ENCODE measurements at regions of chr1 and their contacts with region 1.

Region 1: GRCh38 chr1:151839457-151840405 is at the start of gene C2CD4D:
- DNase-seq: peak; percentile 50 to 91 (median 59)
- ATAC-seq: peak; percentile 78
- H3K4me3 ChIP-seq: peak within 1 kb of the TSS; percentile 70
- H3K4me3 Mint-ChIP-seq: peak within 1 kb of the TSS; percentile 85
- H3K27ac ChIP-seq: peak within 1 kb of the TSS; percentile 54 to 90
- H3K27ac Mint-ChIP-seq: peak within 1 kb of the TSS; percentile 86
- H3K4me1 ChIP-seq: peaks cover 55% of the 10 kb centered on the region
- H3K4me1 Mint-ChIP-seq: peaks cover 62% of the 10 kb centered on the region
- H3K27me3 ChIP-seq: no peaks in the 10 kb centered on the region
- H3K27me3 Mint-ChIP-seq: no peaks in the 10 kb centered on the region
- CTCF ChIP-seq: no peak
- total RNA-seq, gene C2CD4D: 0.75 to 0.88 TPM

Region 2: DNA sequence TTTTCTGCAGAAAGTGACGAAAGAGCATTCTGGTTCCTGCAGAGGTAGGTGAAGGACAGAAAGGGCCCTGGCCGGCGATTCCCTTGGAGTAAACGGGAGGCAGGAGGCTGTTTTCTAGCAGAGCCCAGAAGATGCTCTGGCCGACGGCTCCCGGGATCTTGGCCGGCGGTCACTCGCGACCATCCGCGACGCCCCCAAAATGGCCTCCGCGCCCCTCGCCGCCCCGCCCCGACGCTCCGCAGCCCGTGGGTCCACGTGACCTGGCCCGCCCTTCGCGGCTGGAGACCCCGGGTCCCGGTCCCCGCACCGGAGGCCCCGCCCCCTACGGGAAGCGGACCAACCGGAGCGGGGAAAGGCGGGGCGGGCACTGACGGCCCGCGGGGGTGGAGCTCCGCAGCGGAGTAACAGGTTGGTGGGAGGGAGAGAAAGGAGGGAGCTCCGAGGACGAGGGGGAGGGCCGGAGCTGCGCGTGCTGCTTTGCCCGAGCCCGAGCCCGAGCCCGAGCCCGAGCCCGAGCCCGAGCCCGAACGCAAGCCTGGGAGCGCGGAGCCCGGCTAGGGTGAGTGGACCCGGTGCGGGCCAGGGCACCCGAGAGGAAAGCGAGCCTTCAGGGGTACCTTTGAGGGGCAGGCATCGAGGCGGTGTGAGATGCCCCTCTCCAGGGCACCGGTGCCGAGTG is 328.6 kb before region 1 on chr1 and contains the start of gene CGN:
- CTCF ChIA-PET with region 1: no interaction called
- POLR2A ChIA-PET with region 1: no interaction called
- intact Hi-C with region 1: no loop called
- DNase-seq: peak; percentile 70 to 95 (median 84)
- ATAC-seq: peak; percentile 97
- H3K4me3 ChIP-seq: peak within 1 kb of the TSS; percentile 76
- H3K4me3 Mint-ChIP-seq: peak within 1 kb of the TSS; percentile 97
- H3K27ac ChIP-seq: peak within 1 kb of the TSS in 1 of 2 donors; percentile 6
- H3K27ac Mint-ChIP-seq: peak within 1 kb of the TSS; percentile 75
- H3K4me1 ChIP-seq: peaks cover 30% of the 10 kb centered on the region
- H3K4me1 Mint-ChIP-seq: peaks cover 32% of the 10 kb centered on the region
- H3K27me3 ChIP-seq: no peaks in the 10 kb centered on the region
- H3K27me3 Mint-ChIP-seq: no peaks in the 10 kb centered on the region
- CTCF ChIP-seq: no peak
- total RNA-seq, gene CGN: 0.08 to 0.28 TPM

Region 3: DNA sequence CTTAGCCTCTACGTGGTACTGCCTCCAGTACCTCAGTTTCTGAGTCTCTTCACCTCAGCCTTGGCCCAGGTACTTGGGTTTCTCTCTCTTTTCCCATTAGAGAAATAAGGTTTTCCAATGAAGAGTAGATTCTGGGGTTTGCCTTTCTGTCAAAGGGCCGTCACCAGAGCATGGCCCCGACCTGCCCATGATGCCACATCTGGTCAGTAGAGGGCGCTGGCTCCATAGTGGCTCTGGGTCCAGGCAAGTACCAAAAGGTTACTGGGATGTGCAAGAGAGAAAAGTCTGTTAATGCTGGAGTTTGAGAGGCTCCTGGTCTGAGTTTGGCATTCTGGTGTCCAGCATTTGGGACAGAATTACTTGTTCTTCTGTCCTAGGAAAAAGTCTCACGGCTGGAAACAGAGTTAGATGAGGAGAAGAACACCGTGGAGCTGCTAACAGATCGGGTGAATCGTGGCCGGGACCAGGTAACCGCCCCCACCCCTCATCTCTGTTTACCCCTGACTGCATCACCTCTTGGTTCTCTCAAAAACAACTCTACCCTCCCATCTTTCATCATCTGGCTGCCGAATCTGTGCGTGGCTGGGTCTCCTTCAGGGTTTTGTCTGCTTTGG is 305.0 kb before region 1 on chr1:
- CTCF ChIA-PET with region 1: interaction called, 3 read pairs
- POLR2A ChIA-PET with region 1: no interaction called
- intact Hi-C with region 1: loop called in 1 of 2 experiments (anchors 2 kb)
- DNase-seq: peak; percentile 60 to 84 (median 72)
- ATAC-seq: peak; percentile 84
- H3K4me3 ChIP-seq: no peak overlapping the region
- H3K4me3 Mint-ChIP-seq: no peak overlapping the region
- H3K27ac ChIP-seq: no peak overlapping the region
- H3K27ac Mint-ChIP-seq: no peak overlapping the region
- H3K4me1 ChIP-seq: peaks cover 10% of the 10 kb centered on the region
- H3K4me1 Mint-ChIP-seq: peaks cover 5% of the 10 kb centered on the region
- H3K27me3 ChIP-seq: no peaks in the 10 kb centered on the region
- H3K27me3 Mint-ChIP-seq: no peaks in the 10 kb centered on the region
- CTCF ChIP-seq: peak; percentile 82

Region 4: DNA sequence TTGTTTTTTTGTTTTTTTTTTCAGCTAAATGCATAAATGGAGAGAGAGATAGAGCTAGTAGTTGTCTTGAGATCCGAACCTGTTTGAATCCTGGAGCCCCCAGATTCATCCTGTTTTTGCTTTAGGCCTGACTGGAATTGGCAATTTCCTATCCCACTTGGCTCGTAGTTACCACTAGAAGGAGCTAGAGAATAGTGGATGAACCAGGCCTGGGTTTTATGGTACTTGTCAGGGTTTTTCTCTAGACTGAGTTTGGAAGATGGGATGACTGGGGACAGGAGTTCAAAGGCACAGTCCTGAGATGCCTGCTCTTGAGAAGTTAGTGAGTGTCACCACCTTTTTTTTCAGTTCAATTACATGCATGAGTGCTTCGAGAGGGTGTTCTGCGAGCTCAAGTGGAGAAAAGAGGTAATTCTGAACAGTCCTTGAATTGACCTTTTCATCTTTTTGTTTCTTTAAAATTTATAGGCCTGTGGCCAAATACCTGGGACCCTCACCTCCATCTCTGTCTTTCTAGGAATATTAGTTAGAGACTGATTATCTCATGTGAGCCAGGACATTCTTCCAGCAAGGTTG is 146.6 kb before region 1 on chr1:
- CTCF ChIA-PET with region 1: no interaction called
- POLR2A ChIA-PET with region 1: no interaction called
- intact Hi-C with region 1: loop called in 1 of 2 experiments (anchors 1 kb)
- DNase-seq: no peak
- ATAC-seq: no peak
- H3K4me3 ChIP-seq: no peak overlapping the region
- H3K4me3 Mint-ChIP-seq: no peak overlapping the region
- H3K27ac ChIP-seq: no peak overlapping the region
- H3K27ac Mint-ChIP-seq: no peak overlapping the region
- H3K4me1 ChIP-seq: peaks cover 2% of the 10 kb centered on the region
- H3K4me1 Mint-ChIP-seq: no peaks in the 10 kb centered on the region
- H3K27me3 ChIP-seq: no peaks in the 10 kb centered on the region
- H3K27me3 Mint-ChIP-seq: no peaks in the 10 kb centered on the region
- CTCF ChIP-seq: no peak

Region 5: GRCh38 chr1:151790071-151790940 is 49.4 kb before region 1 on chr1 and contains the start of gene TDRKH:
- CTCF ChIA-PET with region 1: interaction called, 8 read pairs
- POLR2A ChIA-PET with region 1: interaction called, 23 read pairs
- intact Hi-C with region 1: loop called (anchors 2 kb)
- DNase-seq: peak; percentile 95 to 99 (median 97)
- ATAC-seq: peak; percentile 95
- H3K4me3 ChIP-seq: peak within 1 kb of the TSS; percentile 94
- H3K4me3 Mint-ChIP-seq: peak within 1 kb of the TSS; percentile 94
- H3K27ac ChIP-seq: peak within 1 kb of the TSS in 1 of 2 donors; percentile 69
- H3K27ac Mint-ChIP-seq: peak within 1 kb of the TSS; percentile 63
- H3K4me1 ChIP-seq: peaks cover 21% of the 10 kb centered on the region
- H3K4me1 Mint-ChIP-seq: peaks cover 26% of the 10 kb centered on the region
- H3K27me3 ChIP-seq: no peaks in the 10 kb centered on the region
- H3K27me3 Mint-ChIP-seq: no peaks in the 10 kb centered on the region
- CTCF ChIP-seq: no peak
- total RNA-seq, gene TDRKH: 6.1 to 6.4 TPM